ENCODE measurements at regions of chr17 and their contacts with region 1.

Region 1: GRCh38 chr17:72421128-72422092 is 300.6 kb downstream of the SOX9 start:
- DNase-seq: peak; percentile 94
- ATAC-seq: peak; percentile 44
- H3K4me3 ChIP-seq: peak overlapping the region; percentile 42; the same call in 1 of the 2 replicates
- H3K27ac ChIP-seq: peak overlapping the region; percentile 95
- H3K4me1 ChIP-seq: peaks cover 64% of the 10 kb centered on the region
- H3K27me3 ChIP-seq: no peaks in the 10 kb centered on the region
- CTCF ChIP-seq: no peak
- EP300 ChIP-seq: peak; percentile 97
- POLR2A ChIP-seq: peak; percentile 61
- RAD21 ChIP-seq: peak; percentile 12; the same call in 1 of the 2 replicates

Region 2: DNA sequence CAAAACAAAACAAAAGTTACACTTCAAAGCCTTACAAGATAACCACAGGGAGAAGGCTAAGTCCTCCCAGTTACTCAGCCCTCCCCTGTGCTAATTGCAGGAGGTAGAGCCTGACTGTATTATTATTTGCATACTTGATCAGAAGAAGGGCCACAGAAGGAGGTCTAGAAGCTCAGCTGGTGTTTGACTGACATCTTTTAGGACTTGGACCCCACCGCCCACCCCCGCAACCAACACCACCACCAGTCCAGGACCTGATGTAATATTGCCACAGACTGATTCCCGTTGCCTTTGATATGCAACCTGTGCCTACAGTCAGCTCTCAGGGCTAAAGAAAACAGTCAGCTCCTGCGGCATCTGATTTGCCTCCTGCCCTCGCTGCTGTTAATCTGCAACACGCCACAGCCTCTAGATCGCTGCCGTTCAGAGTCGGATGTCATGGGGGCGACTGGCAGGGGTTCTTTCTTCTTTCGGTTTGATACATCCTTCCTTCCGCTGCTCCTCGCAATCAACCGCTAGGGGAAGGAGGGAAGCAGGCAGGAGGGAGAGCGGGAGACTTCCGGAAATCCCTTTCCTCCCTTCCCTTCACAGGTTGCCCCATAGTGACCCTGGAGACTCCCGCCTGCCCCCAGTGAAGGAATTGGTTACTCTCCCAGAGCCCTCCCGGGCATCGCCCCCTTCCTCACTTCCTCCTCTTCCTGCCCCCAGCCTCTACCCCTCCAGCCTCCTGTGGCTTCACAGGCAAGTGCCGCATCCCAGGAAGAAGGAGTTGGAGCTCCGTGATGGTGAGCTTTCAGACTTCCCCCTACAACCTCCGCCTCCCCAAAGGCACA is 391.1 kb before region 1 on chr17:
- CTCF ChIA-PET with region 1: no interaction called
- POLR2A ChIA-PET with region 1: interaction called, 5 read pairs
- RAD21 ChIA-PET with region 1: interaction called, 11 read pairs
- SMC1A ChIA-PET with region 1: no interaction called
- in situ Hi-C with region 1: loop called (anchors 5 kb)
- intact Hi-C with region 1: loop called (anchors 2 kb)
- DNase-seq: peak; percentile 71
- ATAC-seq: peak; percentile 81
- H3K4me3 ChIP-seq: peak overlapping the region; percentile 80
- H3K27ac ChIP-seq: peak overlapping the region; percentile 91
- H3K4me1 ChIP-seq: peaks cover 45% of the 10 kb centered on the region
- H3K27me3 ChIP-seq: no peaks in the 10 kb centered on the region
- CTCF ChIP-seq: peak; percentile 30 to 48 (median 40); a peak in 4 of 6 replicates
- EP300 ChIP-seq: 0 out of 4 replicates have a peak, but pooled peaks of 1 of the 2 experiments have one; percentile 4
- POLR2A ChIP-seq: peak; percentile 65
- RAD21 ChIP-seq: peak; percentile 25; the same call in 1 of the 2 replicates

Region 3: DNA sequence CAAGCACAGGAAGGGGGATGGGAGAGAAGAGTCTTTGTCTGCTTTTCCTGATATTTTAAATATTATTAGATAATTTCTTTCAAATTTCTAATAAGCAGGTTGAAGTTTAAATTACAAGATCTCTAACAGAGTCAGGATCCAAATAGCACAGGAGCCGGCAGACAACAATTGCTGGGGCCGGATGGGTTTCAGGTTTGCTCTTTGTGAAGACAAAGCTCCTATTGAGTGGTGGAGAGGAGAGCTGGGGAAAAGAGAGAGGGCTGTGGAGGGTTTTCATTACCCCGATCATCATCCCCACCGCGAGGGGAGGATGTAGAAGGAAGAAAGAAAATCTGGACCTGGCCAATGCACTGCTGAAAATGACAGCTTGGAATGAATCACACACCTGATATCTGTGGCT is 103.3 kb before region 1 on chr17:
- CTCF ChIA-PET with region 1: interaction called, 4 read pairs
- POLR2A ChIA-PET with region 1: no interaction called
- RAD21 ChIA-PET with region 1: interaction called, 36 read pairs
- SMC1A ChIA-PET with region 1: interaction called, 9 read pairs
- in situ Hi-C with region 1: loop called (anchors 5 kb)
- intact Hi-C with region 1: loop called (anchors 2 kb)
- DNase-seq: no peak
- ATAC-seq: peak; percentile 13
- H3K4me3 ChIP-seq: no peak overlapping the region
- H3K27ac ChIP-seq: no peak overlapping the region
- H3K4me1 ChIP-seq: peaks cover 16% of the 10 kb centered on the region
- H3K27me3 ChIP-seq: no peaks in the 10 kb centered on the region
- CTCF ChIP-seq: no peak
- EP300 ChIP-seq: 0 out of 4 replicates have a peak, but pooled peaks of 1 of the 2 experiments have one; percentile 4
- POLR2A ChIP-seq: no peak
- RAD21 ChIP-seq: no peak

Region 4: GRCh38 chr17:72407336-72407909 is 14.0 kb before region 1 on chr17:
- CTCF ChIA-PET with region 1: interaction called, 4 read pairs
- POLR2A ChIA-PET with region 1: interaction called, 5 read pairs
- RAD21 ChIA-PET with region 1: interaction called, 37 read pairs
- SMC1A ChIA-PET with region 1: interaction called, 55 read pairs
- in situ Hi-C with region 1: no loop called
- intact Hi-C with region 1: loop called (anchors 2 kb)
- DNase-seq: no peak
- ATAC-seq: peak; percentile 91
- H3K4me3 ChIP-seq: no peak overlapping the region
- H3K27ac ChIP-seq: peak overlapping the region; percentile 13; the same call in 1 of the 2 replicates
- H3K4me1 ChIP-seq: peaks cover 13% of the 10 kb centered on the region
- H3K27me3 ChIP-seq: no peaks in the 10 kb centered on the region
- CTCF ChIP-seq: no peak
- EP300 ChIP-seq: peak; percentile 58 to 76; a peak in 3 of 4 replicates
- POLR2A ChIP-seq: no peak
- RAD21 ChIP-seq: no peak

Region 5: GRCh38 chr17:72516772-72517399 is 95.5 kb after region 1 on chr17:
- CTCF ChIA-PET with region 1: interaction called, 53 read pairs
- POLR2A ChIA-PET with region 1: interaction called, 111 read pairs
- RAD21 ChIA-PET with region 1: interaction called, 361 read pairs
- SMC1A ChIA-PET with region 1: interaction called, 291 read pairs
- in situ Hi-C with region 1: loop called (anchors 5 kb)
- intact Hi-C with region 1: loop called (anchors 1 kb)
- DNase-seq: no peak
- ATAC-seq: peak; percentile 53
- H3K4me3 ChIP-seq: no peak overlapping the region
- H3K27ac ChIP-seq: peak overlapping the region; percentile 84
- H3K4me1 ChIP-seq: peaks cover 56% of the 10 kb centered on the region
- H3K27me3 ChIP-seq: no peaks in the 10 kb centered on the region
- CTCF ChIP-seq: peak in 2 of 3 experiments; percentile 8 to 37; a peak in 1 of 6 replicates
- EP300 ChIP-seq: no peak
- POLR2A ChIP-seq: no peak
- RAD21 ChIP-seq: no peak

Measured in GM12878 (cell line).